A549 (cell line): ENCODE measurements at regions of chr12 and their contacts with region 1.

Region 1: GRCh38 chr12:104223712-104224111 is 8.1 kb downstream of the TXNRD1 start:
- DNase-seq: peak in 1 of 2 experiments; percentile 28
- ATAC-seq: no peak
- H3K4me3 ChIP-seq: no peak overlapping the region
- H3K27ac ChIP-seq: peak overlapping the region; percentile 95 to 98
- H3K4me1 ChIP-seq: peaks cover 47% of the 10 kb centered on the region
- CTCF ChIP-seq: no peak
- EP300 ChIP-seq: no peak
- POLR2A ChIP-seq: no peak
- RAD21 ChIP-seq: no peak

Region 2: DNA sequence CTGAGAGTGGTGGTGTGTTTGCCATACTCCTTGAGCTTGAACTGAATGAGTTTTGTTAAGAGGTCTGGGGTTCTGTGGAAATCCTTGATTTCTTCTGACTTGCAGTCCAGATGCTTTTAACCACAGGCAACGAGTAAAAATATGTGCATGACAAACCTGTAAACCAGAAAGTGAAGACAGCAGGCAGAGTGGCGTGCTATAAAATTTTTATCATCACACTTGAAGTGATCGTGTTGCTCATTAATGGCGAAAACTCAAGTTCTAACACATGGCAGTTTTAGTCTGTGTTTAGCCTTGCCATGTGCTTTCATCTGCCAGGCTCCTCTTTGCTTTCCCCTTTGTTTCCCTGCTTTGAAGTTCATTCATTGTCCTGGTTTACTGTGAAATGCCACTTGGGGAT is 19.8 kb after region 1 on chr12:
- CTCF ChIA-PET with region 1: interaction called, 15 read pairs
- POLR2A ChIA-PET with region 1: interaction called, 3 read pairs
- DNase-seq: no peak
- ATAC-seq: peak in 1 of 2 experiments; percentile 39; a peak in 3 of 6 replicates
- H3K4me3 ChIP-seq: no peak overlapping the region
- H3K27ac ChIP-seq: peak overlapping the region in 1 of 2 experiments; percentile 15; a peak in 1 of 6 replicates
- H3K4me1 ChIP-seq: peaks cover 10% of the 10 kb centered on the region; the same call in 1 of the 3 replicates
- CTCF ChIP-seq: no peak
- EP300 ChIP-seq: no peak
- POLR2A ChIP-seq: no peak
- RAD21 ChIP-seq: no peak

Region 3: DNA sequence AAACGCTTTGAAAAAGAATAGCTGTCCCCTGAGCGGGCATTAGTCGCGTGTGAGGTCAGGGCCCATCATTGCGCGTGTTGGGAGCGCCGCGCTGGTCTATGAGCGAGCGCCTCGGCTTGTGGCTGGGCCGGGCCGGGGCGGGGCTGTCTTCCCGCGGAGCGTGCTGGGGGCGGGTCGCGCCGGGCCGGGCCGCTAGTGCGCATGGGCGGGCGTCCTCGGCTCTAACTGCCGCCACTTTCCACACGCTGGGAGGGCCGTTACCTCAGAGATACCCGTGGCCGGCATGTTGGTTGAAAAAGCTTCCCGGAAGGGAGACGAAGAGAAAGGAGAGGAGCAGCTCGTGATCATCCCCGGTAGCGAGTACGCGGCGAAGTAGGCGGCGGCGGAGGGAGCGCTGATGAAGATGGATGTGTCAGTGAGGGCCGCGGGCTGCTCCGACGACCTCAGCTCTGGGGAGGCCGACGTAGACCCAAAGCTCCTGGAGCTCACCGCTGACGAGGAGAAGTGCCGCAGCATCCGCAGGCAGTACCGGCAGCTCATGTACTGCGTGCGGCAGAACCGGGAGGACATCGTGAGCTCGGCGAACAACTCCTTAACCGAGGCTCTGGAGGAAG is 79.9 kb after region 1 on chr12 and contains the start of gene EID3:
- CTCF ChIA-PET with region 1: interaction called, 4 read pairs
- POLR2A ChIA-PET with region 1: interaction called, 28 read pairs
- DNase-seq: peak; percentile 53 to 90
- ATAC-seq: peak; percentile 56 to 58
- H3K4me3 ChIP-seq: peak within 1 kb of the TSS; percentile 68
- H3K27ac ChIP-seq: peak within 1 kb of the TSS; percentile 73 to 98
- H3K4me1 ChIP-seq: peaks cover 81% of the 10 kb centered on the region
- CTCF ChIP-seq: no peak
- EP300 ChIP-seq: no peak
- POLR2A ChIP-seq: no peak
- RAD21 ChIP-seq: no peak
- polyA plus RNA-seq, gene EID3: 9.3 and 12.2 TPM in 2 replicates